Cardiac septum (tissue), 1 donor: ENCODE measurements at regions of chr9 and their contacts with region 1.

Region 1: GRCh38 chr9:69056191-69056815 is 20.8 kb downstream of the FXN start:
- DNase-seq: no peak

Region 2: DNA sequence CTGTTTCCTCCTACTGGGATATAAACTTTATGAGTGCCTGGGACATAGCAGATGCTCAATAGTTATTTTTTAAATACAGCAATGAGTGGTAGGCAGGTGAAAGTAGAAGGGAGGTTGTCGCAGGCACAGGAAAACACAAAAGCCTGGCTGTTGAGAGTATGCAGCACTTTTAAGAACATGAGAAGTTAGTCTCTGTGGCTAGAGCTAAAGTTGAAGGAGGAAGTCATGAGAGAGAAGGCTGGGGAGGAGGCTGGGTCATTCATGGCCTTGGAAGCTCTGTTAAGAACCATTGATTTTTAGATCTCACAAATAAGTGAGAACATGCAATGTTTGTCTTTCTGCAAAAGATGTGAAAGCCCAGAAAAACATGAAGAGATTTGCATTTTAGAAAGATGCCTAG is 169.1 kb before region 1 on chr9:
- intact Hi-C with region 1: no loop called
- DNase-seq: no peak

Region 3: DNA sequence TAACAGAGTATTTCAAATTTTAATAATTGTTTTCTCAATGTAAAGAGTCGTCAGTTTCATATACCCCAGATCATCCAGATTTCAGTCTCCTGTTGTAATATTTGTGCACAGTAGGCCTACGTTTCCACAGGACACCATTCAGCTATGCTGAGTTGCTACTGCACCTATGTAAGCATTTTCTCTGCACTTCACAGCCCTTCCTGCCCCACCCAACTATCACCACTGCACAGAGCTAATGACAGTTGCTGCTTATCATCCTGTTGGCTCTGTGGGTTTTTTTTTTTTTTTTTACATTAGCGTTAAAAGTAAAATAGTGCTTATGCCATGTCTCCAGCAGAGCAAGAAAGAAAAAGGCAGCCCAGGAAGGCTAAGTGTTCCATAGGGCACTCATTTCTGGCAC is 36.5 kb before region 1 on chr9:
- intact Hi-C with region 1: no loop called
- DNase-seq: no peak

Region 4: DNA sequence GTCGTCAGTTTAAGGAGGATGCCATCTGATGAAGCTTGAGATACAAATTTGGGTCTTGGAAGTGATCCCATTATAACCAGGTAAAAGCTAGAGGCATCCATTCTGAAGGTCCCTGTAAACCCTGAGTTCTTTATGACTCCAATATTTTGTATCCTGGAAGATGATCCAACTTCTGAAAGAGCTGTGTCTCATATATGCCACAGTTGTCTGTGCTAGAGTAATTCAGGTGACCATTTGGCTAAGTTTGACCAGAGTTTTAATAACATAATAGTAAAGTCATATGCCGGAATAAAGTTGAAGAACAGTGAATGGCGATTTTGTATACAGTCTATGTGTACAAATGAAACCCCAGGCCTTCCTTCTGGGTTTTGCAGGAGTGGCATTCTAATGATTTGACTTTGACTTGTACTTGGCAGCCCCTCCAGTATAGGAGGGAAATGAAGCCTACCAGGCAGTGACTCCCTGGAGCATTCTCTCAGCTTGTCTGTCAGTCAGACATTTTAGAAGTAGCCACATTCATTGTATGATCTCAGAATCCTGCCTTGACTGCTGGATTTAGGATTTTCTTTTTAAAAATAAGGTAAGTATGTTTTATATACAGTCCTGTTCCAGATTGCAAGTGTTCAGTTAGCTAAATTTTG is 308.3 kb after region 1 on chr9:
- intact Hi-C with region 1: no loop called
- DNase-seq: no peak

Region 5: GRCh38 chr9:69397384-69398214 is 341.3 kb after region 1 on chr9:
- intact Hi-C with region 1: loop called (anchors 10 kb)
- DNase-seq: no peak

Region 6: GRCh38 chr9:69549310-69550202 is 493.3 kb after region 1 on chr9:
- intact Hi-C with region 1: loop called (anchors 10 kb)
- DNase-seq: no peak